Posterior vena cava (tissue), 2 donors: ENCODE measurements at regions of chr12 and their contacts with region 1.

Region 1: GRCh38 chr12:128240745-128241144 is 26.2 kb upstream of the TMEM132C start:
- DNase-seq: no peak

Region 2: GRCh38 chr12:127703026-127703425 is 537.7 kb before region 1 on chr12:
- intact Hi-C with region 1: loop called in 1 of 2 experiments (anchors 5 kb)
- DNase-seq: no peak